Activated naive CD4-positive, alpha-beta T cell treated with anti-CD3 and anti-CD28 coated beads for 36 hours (primary cell): ENCODE measurements at regions of chr1 and their contacts with region 1.

Region 1: DNA sequence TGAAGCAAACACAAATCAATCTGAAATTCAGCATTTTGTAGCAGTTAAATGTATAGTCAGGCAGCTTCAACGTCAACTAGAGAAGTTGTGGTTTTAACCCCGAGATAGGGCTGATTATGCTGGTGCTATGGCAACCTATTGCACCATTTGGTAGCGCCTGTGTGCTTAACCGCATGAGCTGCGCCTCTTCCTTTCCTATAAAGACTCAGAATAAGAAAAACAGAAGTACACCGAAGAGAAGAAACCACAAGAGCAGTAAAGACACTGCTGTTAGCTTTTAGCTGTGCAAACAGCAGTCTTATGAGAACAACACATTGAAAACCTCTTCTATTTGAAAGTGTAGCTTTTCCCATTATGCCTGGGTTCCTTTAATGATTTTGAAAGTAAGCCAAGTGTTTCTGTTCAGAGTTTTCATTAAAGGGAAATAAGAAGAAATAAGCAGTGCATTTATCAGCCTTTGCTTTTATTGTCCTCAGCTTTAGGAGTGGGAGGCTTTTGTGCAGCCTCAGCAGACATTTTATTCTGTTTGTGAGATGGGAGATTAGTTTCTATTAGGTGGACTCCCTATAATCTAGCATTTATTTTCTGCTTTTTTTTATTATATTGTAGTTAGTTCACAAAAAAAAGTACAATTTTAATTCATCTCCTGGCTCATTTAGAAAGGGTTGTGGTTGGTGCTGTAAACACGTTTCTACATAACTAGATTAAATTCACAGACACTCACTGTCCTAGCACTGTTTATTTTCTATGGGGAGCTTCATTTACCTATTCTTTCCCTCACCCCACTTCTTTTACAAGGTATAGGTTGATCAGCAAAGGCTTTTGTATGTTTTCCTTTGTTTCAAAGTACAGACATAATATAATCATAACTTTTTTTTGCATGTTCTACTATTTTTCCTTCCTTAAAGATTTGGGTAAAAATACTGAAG is 43.3 kb downstream of the PTPRC start:
- DNase-seq: peak; percentile 86
- H3K4me3 Mint-ChIP-seq: peak overlapping the region; percentile 61
- H3K27ac Mint-ChIP-seq: peak overlapping the region; percentile 99
- H3K4me1 Mint-ChIP-seq: peaks cover 86% of the 10 kb centered on the region
- H3K27me3 Mint-ChIP-seq: no peaks in the 10 kb centered on the region

Region 2: DNA sequence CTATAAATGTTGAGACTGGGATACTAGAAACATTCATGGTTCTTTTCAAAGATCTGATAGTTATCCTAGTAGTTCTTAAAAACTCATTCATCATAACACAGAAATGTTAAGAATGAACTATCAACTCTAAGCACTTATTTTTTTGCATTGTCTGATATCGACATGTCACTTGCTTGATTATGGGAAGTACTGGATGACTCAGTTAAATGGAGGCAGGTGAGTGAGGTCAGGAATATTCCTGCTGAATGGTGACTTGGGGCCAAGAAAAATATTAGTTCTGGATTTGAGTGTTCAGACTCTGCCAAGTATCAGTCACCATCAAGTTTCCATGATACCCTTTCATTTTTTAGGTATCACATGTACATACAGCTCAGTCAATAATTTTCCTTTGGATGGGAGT is 461.7 kb before region 1 on chr1:
- CTCF ChIA-PET with region 1: no interaction called
- intact Hi-C with region 1: no loop called
- DNase-seq: no peak
- H3K4me3 Mint-ChIP-seq: no peak overlapping the region
- H3K27ac Mint-ChIP-seq: no peak overlapping the region
- H3K4me1 Mint-ChIP-seq: peaks cover 19% of the 10 kb centered on the region
- H3K27me3 Mint-ChIP-seq: no peaks in the 10 kb centered on the region

Region 3: GRCh38 chr1:198253668-198254067 is 428.4 kb before region 1 on chr1:
- CTCF ChIA-PET with region 1: no interaction called
- intact Hi-C with region 1: loop called (anchors 5 kb)
- DNase-seq: no peak
- H3K4me3 Mint-ChIP-seq: no peak overlapping the region
- H3K27ac Mint-ChIP-seq: no peak overlapping the region
- H3K4me1 Mint-ChIP-seq: peaks cover 46% of the 10 kb centered on the region
- H3K27me3 Mint-ChIP-seq: no peaks in the 10 kb centered on the region

Region 4: DNA sequence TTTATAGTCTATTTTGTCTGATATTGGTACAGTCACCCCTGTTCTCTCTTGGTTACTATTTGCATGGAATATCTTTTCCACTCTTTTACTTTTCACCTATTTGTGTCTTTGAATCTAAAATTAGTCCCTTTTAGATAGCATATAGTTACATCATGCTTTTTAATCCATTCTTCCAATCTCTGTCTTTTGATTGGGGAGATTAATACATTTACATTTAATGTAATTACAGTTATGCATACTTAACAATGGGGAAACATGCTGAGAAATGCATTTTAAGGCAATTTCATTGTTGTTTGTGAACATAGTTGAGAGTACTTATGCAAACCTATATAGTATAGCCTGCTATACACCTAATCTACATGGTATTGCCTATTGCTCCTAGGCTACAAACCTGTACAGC is 93.2 kb before region 1 on chr1:
- CTCF ChIA-PET with region 1: no interaction called
- intact Hi-C with region 1: no loop called
- DNase-seq: no peak
- H3K4me3 Mint-ChIP-seq: no peak overlapping the region
- H3K27ac Mint-ChIP-seq: no peak overlapping the region
- H3K4me1 Mint-ChIP-seq: peaks cover 13% of the 10 kb centered on the region
- H3K27me3 Mint-ChIP-seq: no peaks in the 10 kb centered on the region

Region 5: DNA sequence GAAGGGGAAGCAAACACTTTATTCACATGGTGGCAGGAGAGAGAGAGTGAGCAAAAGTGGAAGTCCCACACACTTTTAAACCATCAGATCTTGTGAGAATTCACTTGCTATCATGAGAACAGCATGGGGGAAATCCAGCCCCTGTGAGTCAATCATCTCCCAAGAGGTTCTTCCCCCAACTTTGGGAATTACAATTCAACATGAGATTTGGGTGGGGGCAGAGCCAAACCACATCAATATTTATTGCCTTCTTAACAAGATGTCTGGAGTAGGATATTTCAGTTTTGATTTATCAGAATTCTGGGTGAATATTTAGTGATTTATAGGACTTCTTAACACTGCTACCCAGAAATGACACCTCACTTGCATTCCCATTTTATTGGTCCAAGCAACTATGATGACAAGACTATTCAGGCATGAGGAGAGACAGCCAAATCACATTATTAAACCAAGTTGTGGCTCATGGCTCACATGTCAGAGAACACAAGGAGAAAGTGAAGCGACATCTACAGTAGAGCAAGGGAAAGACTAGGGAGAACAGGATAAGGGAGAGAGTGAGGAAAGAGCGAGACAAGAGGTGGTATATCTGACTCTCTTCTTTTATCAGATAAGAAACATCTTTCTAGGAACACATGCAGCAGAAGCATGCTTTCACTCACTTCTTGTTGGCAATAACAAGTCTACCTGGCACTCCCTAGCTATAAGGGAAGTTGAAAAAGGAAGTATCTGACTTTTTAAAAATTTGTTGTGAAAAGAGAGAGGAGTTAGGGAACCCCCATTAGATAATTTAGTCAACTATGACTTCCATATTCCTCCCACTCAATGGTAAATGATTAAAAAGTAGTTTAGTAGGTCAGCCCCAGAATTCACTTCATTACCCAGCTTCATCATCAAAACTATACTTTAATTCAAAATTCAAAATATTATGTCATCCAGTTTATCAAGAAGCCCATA is 79.9 kb before region 1 on chr1:
- CTCF ChIA-PET with region 1: interaction called, 4 read pairs
- intact Hi-C with region 1: loop called (anchors 1 kb)
- DNase-seq: peak; percentile 87
- H3K4me3 Mint-ChIP-seq: peak overlapping the region; percentile 51
- H3K27ac Mint-ChIP-seq: peak overlapping the region; percentile 85
- H3K4me1 Mint-ChIP-seq: peaks cover 87% of the 10 kb centered on the region
- H3K27me3 Mint-ChIP-seq: no peaks in the 10 kb centered on the region

Region 6: GRCh38 chr1:198630863-198631262 is 51.2 kb before region 1 on chr1:
- CTCF ChIA-PET with region 1: no interaction called
- intact Hi-C with region 1: no loop called
- DNase-seq: no peak
- H3K4me3 Mint-ChIP-seq: no peak overlapping the region
- H3K27ac Mint-ChIP-seq: peak overlapping the region; percentile 72
- H3K4me1 Mint-ChIP-seq: peaks cover 94% of the 10 kb centered on the region
- H3K27me3 Mint-ChIP-seq: no peaks in the 10 kb centered on the region

Region 7: DNA sequence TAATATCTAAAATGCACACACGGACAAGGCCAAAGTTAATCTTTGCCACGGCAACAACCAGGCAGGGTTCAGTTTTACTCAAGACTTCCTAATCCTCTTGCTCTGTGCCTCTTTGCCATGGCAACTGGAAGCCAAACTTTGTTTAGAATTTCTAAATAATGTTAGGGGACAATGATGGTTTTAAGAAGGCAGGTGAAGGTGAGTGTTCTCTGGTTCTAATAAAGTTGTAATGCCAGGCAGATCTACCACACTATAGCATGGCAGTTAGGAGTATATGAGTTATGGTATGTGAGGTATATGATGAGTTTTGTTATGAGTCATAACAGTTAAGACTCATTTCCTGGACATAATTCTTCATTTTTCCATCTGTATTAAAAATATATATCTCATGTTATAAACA is 40.6 kb before region 1 on chr1:
- CTCF ChIA-PET with region 1: interaction called, 3 read pairs
- intact Hi-C with region 1: loop called (anchors 1 kb)
- DNase-seq: peak; percentile 49
- H3K4me3 Mint-ChIP-seq: peak overlapping the region; percentile 92
- H3K27ac Mint-ChIP-seq: peak overlapping the region; percentile 100
- H3K4me1 Mint-ChIP-seq: peaks cover 41% of the 10 kb centered on the region
- H3K27me3 Mint-ChIP-seq: no peaks in the 10 kb centered on the region

Region 8: GRCh38 chr1:198669023-198669698 is 12.9 kb before region 1 on chr1:
- CTCF ChIA-PET with region 1: interaction called, 9 read pairs
- intact Hi-C with region 1: loop called (anchors 1 kb)
- DNase-seq: peak; percentile 46
- H3K4me3 Mint-ChIP-seq: peak overlapping the region; percentile 57
- H3K27ac Mint-ChIP-seq: peak overlapping the region; percentile 84
- H3K4me1 Mint-ChIP-seq: peaks cover 87% of the 10 kb centered on the region
- H3K27me3 Mint-ChIP-seq: no peaks in the 10 kb centered on the region

Region 9: GRCh38 chr1:198860371-198860770 is 178.3 kb after region 1 on chr1:
- CTCF ChIA-PET with region 1: no interaction called
- intact Hi-C with region 1: no loop called
- DNase-seq: no peak
- H3K4me3 Mint-ChIP-seq: no peak overlapping the region
- H3K27ac Mint-ChIP-seq: no peak overlapping the region
- H3K4me1 Mint-ChIP-seq: no peaks in the 10 kb centered on the region
- H3K27me3 Mint-ChIP-seq: no peaks in the 10 kb centered on the region